ENCODE measurements at regions of chr7 and their contacts with region 1.

Region 1: GRCh38 chr7:76220185-76221057 is 18.7 kb downstream of the SRRM3 start:
- DNase-seq: peak; percentile 47
- H3K4me3 Mint-ChIP-seq: no peak overlapping the region
- H3K27ac Mint-ChIP-seq: no peak overlapping the region
- H3K4me1 Mint-ChIP-seq: no peaks in the 10 kb centered on the region
- H3K27me3 Mint-ChIP-seq: peaks cover 65% of the 10 kb centered on the region
- CTCF ChIP-seq: no peak

Region 2: DNA sequence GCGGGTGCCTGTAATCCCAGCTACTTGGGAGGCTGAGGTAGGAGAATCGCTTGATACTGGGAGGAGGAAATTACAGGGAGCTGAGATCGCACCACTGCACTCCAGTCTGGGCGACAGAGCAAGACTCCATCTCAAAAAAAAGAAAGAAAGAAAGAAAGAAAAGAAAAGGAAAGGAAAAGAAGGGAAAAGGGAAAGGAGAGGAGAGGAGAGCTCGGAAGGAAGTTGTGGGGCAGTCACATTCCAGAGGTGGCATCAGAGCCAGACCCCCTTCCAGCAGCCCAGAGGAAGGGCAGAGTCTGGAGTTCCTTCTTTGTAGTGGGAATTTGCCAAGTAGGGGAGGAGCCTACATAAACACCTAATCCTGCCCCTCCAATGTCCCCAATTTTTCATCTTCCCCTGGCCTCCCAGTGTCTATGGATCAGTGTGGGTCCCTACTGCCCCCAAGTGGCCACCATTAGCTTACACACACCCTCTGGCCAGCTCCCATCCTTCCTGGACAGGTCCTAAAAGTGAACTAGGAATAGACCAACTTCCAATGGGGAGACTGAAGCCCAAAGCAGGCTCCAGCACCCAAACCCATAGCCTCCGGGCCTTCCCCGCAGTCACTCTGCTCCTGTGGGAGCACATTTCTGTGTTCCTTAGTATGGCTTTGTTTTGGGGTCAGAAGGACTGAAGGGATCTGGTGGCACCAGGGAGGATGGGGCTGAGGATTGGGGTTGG is 42.4 kb after region 1 on chr7:
- CTCF ChIA-PET with region 1: interaction called, 11 read pairs
- intact Hi-C with region 1: no loop called
- DNase-seq: peak; percentile 59
- H3K4me3 Mint-ChIP-seq: no peak overlapping the region
- H3K27ac Mint-ChIP-seq: no peak overlapping the region
- H3K4me1 Mint-ChIP-seq: no peaks in the 10 kb centered on the region
- H3K27me3 Mint-ChIP-seq: peaks cover 19% of the 10 kb centered on the region
- CTCF ChIP-seq: peak; percentile 45

Measured in Calu3 (cell line).